Mammary epithelial cell (primary cell): ENCODE measurements at regions of chr12 and their contacts with region 1.

Region 1: GRCh38 chr12:82793751-82794281 is 107.1 kb downstream of the TMTC2 start:
- DNase-seq: no peak
- H3K4me3 ChIP-seq: no peak overlapping the region
- H3K27ac ChIP-seq: no peak overlapping the region
- H3K4me1 ChIP-seq: no peaks in the 10 kb centered on the region
- H3K27me3 ChIP-seq: no peaks in the 10 kb centered on the region
- CTCF ChIP-seq: no peak

Region 2: DNA sequence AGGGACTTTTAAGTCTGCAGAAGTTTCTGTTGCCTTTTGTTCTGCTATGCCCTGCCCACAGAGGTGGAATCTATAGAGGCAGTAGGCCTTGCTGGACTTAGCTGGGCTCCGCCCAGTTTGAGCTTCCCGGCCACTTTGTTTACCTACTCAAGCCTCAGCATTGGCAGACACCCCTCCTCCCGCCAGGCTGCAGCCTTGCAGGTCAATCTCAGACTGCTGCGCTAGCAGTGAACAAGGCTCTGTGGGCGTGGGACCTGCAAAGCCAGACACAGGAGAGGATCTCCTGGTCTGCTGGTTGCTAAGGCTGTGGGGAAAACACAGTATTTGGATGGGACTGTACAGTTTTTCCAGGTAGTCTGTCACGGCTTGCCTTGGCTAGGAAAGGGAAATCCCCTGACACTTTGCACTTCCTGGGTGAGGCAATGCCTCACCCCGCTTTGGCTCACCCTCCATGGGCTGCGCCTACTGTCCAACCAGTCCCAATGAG is 479.4 kb before region 1 on chr12:
- CTCF ChIA-PET with region 1: no interaction called
- dilution Hi-C with region 1: no loop called
- in situ Hi-C with region 1: no loop called
- intact Hi-C with region 1: no loop called
- DNase-seq: peak; percentile 59
- H3K4me3 ChIP-seq: no peak overlapping the region
- H3K27ac ChIP-seq: no peak overlapping the region
- H3K4me1 ChIP-seq: no peaks in the 10 kb centered on the region
- H3K27me3 ChIP-seq: no peaks in the 10 kb centered on the region
- CTCF ChIP-seq: no peak

Region 3: GRCh38 chr12:82896979-82897378 is 103.2 kb after region 1 on chr12:
- CTCF ChIA-PET with region 1: no interaction called
- dilution Hi-C with region 1: no loop called
- in situ Hi-C with region 1: no loop called
- intact Hi-C with region 1: no loop called
- DNase-seq: peak; percentile 81
- H3K4me3 ChIP-seq: no peak overlapping the region
- H3K27ac ChIP-seq: no peak overlapping the region
- H3K4me1 ChIP-seq: peaks cover 7% of the 10 kb centered on the region
- H3K27me3 ChIP-seq: no peaks in the 10 kb centered on the region
- CTCF ChIP-seq: peak in 1 of 2 donors; percentile 30

Region 4: DNA sequence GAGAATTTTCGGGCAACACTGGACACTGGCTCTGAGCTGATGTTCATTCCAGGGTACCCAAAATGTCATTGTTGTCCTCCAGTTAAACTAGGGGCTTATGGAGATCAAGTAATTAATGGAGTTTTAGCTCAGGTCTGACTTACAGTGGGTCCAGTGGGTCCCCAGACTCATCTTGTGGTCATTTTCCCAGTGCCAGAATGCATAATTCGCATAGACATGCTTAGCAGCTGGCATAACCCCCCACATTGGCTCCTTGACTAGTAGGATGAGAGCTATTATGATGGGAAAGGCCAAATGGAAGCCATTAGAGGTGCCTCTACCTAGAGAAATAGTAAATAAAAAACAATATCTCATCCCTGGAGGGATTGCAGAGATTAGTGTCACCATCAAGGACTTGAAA is 711.8 kb after region 1 on chr12:
- CTCF ChIA-PET with region 1: interaction called, 10 read pairs
- dilution Hi-C with region 1: no loop called
- in situ Hi-C with region 1: no loop called
- intact Hi-C with region 1: no loop called
- DNase-seq: no peak
- H3K4me3 ChIP-seq: no peak overlapping the region
- H3K27ac ChIP-seq: no peak overlapping the region
- H3K4me1 ChIP-seq: no peaks in the 10 kb centered on the region
- H3K27me3 ChIP-seq: peaks cover 2% of the 10 kb centered on the region
- CTCF ChIP-seq: no peak